ENCODE measurements at regions of chr1 and their contacts with region 1.

Region 1: GRCh38 chr1:22131875-22132486 is 10.9 kb downstream of the WNT4 start:
- DNase-seq: peak; percentile 65
- H3K4me3 Mint-ChIP-seq: no peak overlapping the region
- H3K27ac Mint-ChIP-seq: no peak overlapping the region
- H3K4me1 Mint-ChIP-seq: no peaks in the 10 kb centered on the region
- H3K27me3 Mint-ChIP-seq: peaks cover 26% of the 10 kb centered on the region

Region 2: GRCh38 chr1:21669258-21670058 is 462.5 kb before region 1 on chr1 and contains the start of gene RAP1GAP:
- CTCF ChIA-PET with region 1: no interaction called
- DNase-seq: peak; percentile 57
- H3K4me3 Mint-ChIP-seq: peak within 1 kb of the TSS; percentile 58
- H3K27ac Mint-ChIP-seq: no peak within 1 kb of the TSS
- H3K4me1 Mint-ChIP-seq: peaks cover 7% of the 10 kb centered on the region
- H3K27me3 Mint-ChIP-seq: peaks cover 81% of the 10 kb centered on the region

Region 3: GRCh38 chr1:22142315-22143064 is 10.5 kb after region 1 on chr1:
- CTCF ChIA-PET with region 1: interaction called, 18 read pairs
- DNase-seq: no peak
- H3K4me3 Mint-ChIP-seq: no peak overlapping the region
- H3K27ac Mint-ChIP-seq: no peak overlapping the region
- H3K4me1 Mint-ChIP-seq: peaks cover 7% of the 10 kb centered on the region
- H3K27me3 Mint-ChIP-seq: peaks cover 90% of the 10 kb centered on the region

Region 4: GRCh38 chr1:22416555-22417454 is 284.8 kb after region 1 on chr1:
- CTCF ChIA-PET with region 1: interaction called, 23 read pairs
- DNase-seq: peak; percentile 86
- H3K4me3 Mint-ChIP-seq: no peak overlapping the region
- H3K27ac Mint-ChIP-seq: no peak overlapping the region
- H3K4me1 Mint-ChIP-seq: peaks cover 2% of the 10 kb centered on the region
- H3K27me3 Mint-ChIP-seq: peaks cover 81% of the 10 kb centered on the region